OCI-LY7 (cell line): ENCODE measurements at regions of chr9 and their contacts with region 1.

Region 1: DNA sequence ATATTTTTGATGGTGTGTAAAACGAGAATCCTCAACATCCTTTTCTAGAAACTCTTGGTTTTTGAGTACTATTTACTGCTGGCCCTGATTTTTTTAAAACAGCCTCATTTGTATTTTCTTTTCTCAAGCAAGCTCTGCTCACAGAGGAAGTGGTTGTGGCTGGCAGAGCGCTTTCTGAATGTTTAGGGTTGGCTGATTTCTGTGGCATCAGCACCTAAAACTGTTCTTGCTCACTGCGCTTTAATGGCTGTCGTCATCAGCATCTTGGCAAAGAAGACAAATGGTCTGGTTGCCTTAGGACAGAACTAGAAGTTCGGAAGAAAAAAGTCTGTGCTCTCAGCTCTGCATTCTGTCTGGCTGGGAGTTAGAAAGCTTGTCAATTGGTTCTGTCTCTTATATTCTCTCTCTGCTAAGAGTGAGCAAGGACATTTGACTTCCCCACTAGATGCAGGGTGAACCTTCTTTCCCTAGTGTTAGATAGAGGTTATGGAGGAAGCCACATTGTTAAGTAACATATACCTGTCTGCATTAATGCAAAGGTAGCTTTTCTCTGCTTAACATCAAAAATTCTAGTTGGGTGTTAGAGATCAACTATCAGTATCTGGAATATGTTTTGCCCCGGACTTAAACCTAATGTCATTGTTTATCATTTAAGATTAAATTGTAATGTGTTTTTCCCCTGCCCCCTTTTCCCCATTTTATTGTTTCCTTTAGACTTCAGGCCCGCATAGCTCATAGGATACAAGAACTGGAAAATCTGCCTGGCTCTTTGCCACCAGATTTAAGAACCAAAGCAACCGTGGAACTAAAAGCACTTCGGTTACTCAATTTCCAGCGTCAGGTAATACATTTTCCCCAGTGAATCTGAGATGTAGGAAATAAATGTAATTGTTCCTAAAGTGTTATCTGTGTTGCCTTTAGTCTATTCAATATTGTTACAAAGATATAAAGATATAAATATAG is 39.0 kb downstream of the SMARCA2 start:
- DNase-seq: peak; percentile 84
- H3K4me3 ChIP-seq: peak overlapping the region; percentile 28
- H3K27ac ChIP-seq: peak overlapping the region; percentile 36
- H3K4me1 ChIP-seq: peaks cover 22% of the 10 kb centered on the region
- CTCF ChIP-seq: no peak

Region 2: GRCh38 chr9:2008372-2008771 is 45.8 kb before region 1 on chr9:
- CTCF ChIA-PET with region 1: interaction called, 3 read pairs
- POLR2A ChIA-PET with region 1: interaction called, 10 read pairs
- intact Hi-C with region 1: no loop called
- DNase-seq: no peak
- H3K4me3 ChIP-seq: no peak overlapping the region
- H3K27ac ChIP-seq: no peak overlapping the region
- H3K4me1 ChIP-seq: no peaks in the 10 kb centered on the region
- CTCF ChIP-seq: no peak

Region 3: GRCh38 chr9:2043881-2044462 is 10.2 kb before region 1 on chr9:
- CTCF ChIA-PET with region 1: interaction called, 4 read pairs
- POLR2A ChIA-PET with region 1: interaction called, 11 read pairs
- intact Hi-C with region 1: no loop called
- DNase-seq: no peak
- H3K4me3 ChIP-seq: no peak overlapping the region
- H3K27ac ChIP-seq: no peak overlapping the region
- H3K4me1 ChIP-seq: peaks cover 9% of the 10 kb centered on the region
- CTCF ChIP-seq: no peak